Prostate gland (tissue), 2 donors: ENCODE measurements at regions of chr9 and their contacts with region 1.

Region 1: DNA sequence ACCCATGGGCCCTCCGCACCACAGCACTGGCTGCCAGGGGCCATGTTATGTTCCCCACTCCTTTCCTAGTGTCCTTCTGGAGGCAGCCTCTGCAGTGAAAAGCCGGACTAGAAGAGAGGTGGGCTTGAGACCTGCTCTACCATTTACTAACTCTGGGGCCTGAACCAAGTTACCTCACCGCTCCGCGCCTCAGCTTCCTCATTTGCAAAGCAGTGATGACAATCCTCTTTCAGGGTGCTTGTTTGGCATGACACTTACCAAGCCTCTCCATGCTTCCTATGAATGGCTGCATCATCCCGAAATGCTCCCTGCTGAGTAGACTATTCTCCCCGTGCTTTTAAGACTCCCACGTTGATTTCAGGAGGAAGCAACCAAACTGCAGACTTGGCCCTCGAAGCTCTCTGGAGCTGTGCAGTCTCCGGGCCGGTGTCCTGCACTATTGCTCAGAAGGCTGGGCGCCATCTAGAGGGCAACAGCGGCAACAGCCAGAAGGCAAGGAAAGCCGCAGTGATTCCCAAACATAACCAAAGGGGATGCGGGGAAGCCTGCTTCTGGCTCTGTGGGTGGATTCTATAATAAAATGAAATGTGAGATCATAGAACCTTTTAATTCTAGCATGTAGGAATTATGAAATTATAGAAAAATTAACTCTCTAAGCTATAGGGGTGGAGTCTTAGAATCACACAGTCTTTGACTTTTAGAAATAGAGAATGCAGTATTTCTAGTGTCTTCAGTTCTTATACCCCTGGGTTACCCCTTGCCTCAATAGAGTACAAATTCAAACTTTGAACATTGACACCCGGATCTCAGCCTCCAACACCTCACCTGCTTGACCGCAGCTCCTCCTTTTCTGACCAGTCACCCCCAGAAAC is 599.8 kb upstream of the BRINP1 start:
- DNase-seq: peak; percentile 75
- H3K4me3 ChIP-seq: no peak overlapping the region
- H3K27ac ChIP-seq: no peak overlapping the region
- H3K4me1 ChIP-seq: peaks cover 5% of the 10 kb centered on the region
- H3K27me3 ChIP-seq: no peaks in the 10 kb centered on the region
- CTCF ChIP-seq: peak; percentile 74 to 84 (median 80)
- POLR2A ChIP-seq: no peak

Region 2: DNA sequence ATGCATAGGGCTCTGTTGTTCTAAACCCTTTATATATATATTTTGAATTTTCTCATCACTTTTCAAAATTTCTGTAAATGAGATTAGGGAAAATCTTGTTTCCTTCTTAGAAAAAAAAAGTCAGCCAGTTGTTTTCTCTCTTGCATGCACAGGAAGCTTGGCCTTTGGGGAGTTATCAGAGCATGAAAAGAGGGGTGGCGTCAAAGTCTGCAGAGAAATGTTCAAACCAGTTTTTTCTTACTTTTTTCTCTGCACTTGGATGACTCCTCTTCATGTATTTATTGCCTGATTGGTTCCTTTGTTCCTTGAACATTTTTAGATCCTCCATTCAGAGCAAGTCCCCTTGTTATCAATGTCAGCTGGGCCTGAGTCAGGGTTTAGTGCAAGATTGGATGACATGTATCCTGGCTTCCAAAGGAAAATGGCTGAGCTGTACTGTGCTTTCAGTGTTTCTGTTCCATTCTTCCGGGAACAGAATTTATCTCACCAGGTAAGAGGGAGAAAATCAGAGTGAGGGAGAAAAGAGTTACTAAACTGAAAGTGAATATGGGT is 207.3 kb before region 1 on chr9:
- intact Hi-C with region 1: no loop called
- DNase-seq: no peak
- H3K4me3 ChIP-seq: no peak overlapping the region
- H3K27ac ChIP-seq: no peak overlapping the region
- H3K4me1 ChIP-seq: no peaks in the 10 kb centered on the region
- H3K27me3 ChIP-seq: no peaks in the 10 kb centered on the region
- CTCF ChIP-seq: no peak
- POLR2A ChIP-seq: no peak

Region 3: GRCh38 chr9:120477521-120478001 is 508.5 kb after region 1 on chr9:
- intact Hi-C with region 1: loop called (anchors 10 kb)
- DNase-seq: peak; percentile 35
- H3K4me3 ChIP-seq: no peak overlapping the region
- H3K27ac ChIP-seq: no peak overlapping the region
- H3K4me1 ChIP-seq: no peaks in the 10 kb centered on the region
- H3K27me3 ChIP-seq: no peaks in the 10 kb centered on the region
- CTCF ChIP-seq: peak; percentile 59 to 87 (median 76)
- POLR2A ChIP-seq: no peak